ENCODE measurements at regions of chr13 and their contacts with region 1.

Region 1: GRCh38 chr13:97369261-97369893 is 64.6 kb upstream of the RAP2A start:
- DNase-seq: no peak
- ATAC-seq: no peak
- H3K4me3 ChIP-seq: 0 out of 4 replicates have a peak overlapping the region, but pooled peaks of 1 of the 2 experiments have one; percentile 8
- H3K27ac ChIP-seq: peak overlapping the region; percentile 68
- H3K4me1 ChIP-seq: peaks cover 37% of the 10 kb centered on the region
- H3K27me3 ChIP-seq: no peaks in the 10 kb centered on the region
- CTCF ChIP-seq: no peak

Region 2: DNA sequence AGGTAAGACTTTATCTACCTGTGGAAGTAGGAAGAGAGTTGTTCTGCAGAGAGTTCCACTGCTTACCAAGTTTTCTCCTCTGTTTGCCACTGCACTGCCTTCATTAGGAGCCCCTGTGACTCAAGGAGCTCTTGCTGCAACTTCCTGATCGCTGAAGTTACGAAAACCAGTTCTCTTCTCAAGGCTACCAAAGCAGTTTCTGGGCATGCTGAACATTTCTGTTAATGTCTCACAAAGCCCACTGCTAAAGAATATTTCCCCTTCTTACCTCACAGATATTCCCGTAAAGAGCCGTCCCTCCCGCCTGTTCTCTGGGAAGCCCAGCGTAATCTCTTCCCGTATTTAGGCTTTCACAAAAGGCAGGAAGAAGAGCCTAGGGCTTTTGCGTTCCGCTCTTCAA is 292.5 kb before region 1 on chr13:
- CTCF ChIA-PET with region 1: no interaction called
- POLR2A ChIA-PET with region 1: no interaction called
- in situ Hi-C with region 1: no loop called
- intact Hi-C with region 1: no loop called
- DNase-seq: no peak
- ATAC-seq: no peak
- H3K4me3 ChIP-seq: no peak overlapping the region
- H3K27ac ChIP-seq: no peak overlapping the region
- H3K4me1 ChIP-seq: no peaks in the 10 kb centered on the region
- H3K27me3 ChIP-seq: no peaks in the 10 kb centered on the region
- CTCF ChIP-seq: no peak

Region 3: GRCh38 chr13:97844151-97844550 is 474.8 kb after region 1 on chr13:
- CTCF ChIA-PET with region 1: no interaction called
- POLR2A ChIA-PET with region 1: interaction called, 11 read pairs
- in situ Hi-C with region 1: no loop called
- intact Hi-C with region 1: no loop called
- DNase-seq: no peak
- ATAC-seq: no peak
- H3K4me3 ChIP-seq: no peak overlapping the region
- H3K27ac ChIP-seq: no peak overlapping the region
- H3K4me1 ChIP-seq: no peaks in the 10 kb centered on the region
- H3K27me3 ChIP-seq: peaks cover 8% of the 10 kb centered on the region
- CTCF ChIP-seq: no peak

Region 4: GRCh38 chr13:98103942-98104880 is 734.8 kb after region 1 on chr13:
- CTCF ChIA-PET with region 1: no interaction called
- POLR2A ChIA-PET with region 1: no interaction called
- in situ Hi-C with region 1: no loop called
- intact Hi-C with region 1: no loop called
- DNase-seq: no peak
- ATAC-seq: peak; percentile 79
- H3K4me3 ChIP-seq: no peak overlapping the region
- H3K27ac ChIP-seq: no peak overlapping the region
- H3K4me1 ChIP-seq: no peaks in the 10 kb centered on the region
- H3K27me3 ChIP-seq: no peaks in the 10 kb centered on the region
- CTCF ChIP-seq: peak; percentile 35; the same call in 1 of the 2 replicates